Naive thymus-derived CD4-positive, alpha-beta T cell (primary cell): ENCODE measurements at regions of chr6 and their contacts with region 1.

Region 1: DNA sequence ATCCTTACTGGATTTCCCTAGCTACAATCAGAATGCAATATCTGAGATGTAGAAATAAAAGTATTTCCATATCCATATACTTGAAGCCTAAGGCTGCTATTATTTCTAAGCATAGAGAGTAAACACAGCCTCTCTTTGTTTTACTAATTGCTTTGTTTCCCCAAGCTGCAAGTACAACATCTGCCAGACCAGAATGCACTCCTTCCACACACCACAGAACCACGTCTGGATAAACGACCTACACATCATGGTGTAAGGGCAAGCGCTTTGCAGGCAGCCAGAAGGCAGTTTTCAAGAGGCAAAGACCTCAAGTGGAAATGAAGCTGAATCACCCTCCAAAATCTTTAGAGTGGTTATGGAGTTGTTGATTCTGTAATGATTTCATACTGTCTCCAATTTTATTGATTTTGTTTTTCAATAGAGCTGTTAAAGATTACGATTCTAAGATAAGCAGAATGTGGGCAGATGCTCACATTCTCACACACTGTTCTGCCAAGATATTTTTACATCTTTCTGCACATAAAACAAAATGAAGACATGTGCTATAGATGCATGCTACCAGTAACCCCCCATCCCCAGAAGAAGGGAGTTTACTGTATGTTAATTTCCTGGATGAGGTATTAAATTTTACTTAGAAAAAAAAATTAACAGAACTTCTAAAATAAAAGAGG is 88.8 kb downstream of the THEMIS start:
- DNase-seq: no peak
- ATAC-seq: no peak
- H3K4me3 ChIP-seq: no peak overlapping the region
- H3K4me3 Mint-ChIP-seq: peak overlapping the region in 8 of 10 donors; percentile 7 to 66 (median 42)
- H3K27ac ChIP-seq: no peak overlapping the region
- H3K27ac Mint-ChIP-seq: peak overlapping the region in 8 of 9 donors; percentile 30 to 83 (median 58)
- H3K4me1 ChIP-seq: peaks cover 36 to 61% of the 10 kb centered on the region in 2 donors
- H3K4me1 Mint-ChIP-seq: peaks cover 48 to 99% (median 93%) of the 10 kb centered on the region in 7 donors
- H3K27me3 ChIP-seq: no peaks in the 10 kb centered on the region
- H3K27me3 Mint-ChIP-seq: no peaks in the 10 kb centered on the region

Region 2: DNA sequence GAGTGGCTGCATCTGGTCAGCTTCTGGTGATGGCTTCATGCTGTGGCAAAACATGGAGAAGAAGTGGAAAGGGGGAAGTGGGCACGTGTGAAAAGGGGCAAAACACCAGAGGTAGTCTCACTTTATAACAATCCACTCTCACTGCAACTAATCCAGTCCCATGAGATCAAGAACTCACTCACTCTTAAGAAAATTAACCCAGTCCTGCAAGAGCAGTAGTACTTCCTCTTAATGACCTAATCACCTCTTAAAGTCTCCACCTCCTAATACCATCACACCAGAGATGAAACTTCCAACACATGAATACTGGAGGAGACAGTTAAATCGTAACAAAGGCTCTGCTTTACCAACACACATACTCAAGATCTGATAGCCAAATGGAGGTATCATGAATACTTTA is 63.7 kb before region 1 on chr6:
- CTCF ChIA-PET with region 1: no interaction called
- POLR2A ChIA-PET with region 1: no interaction called
- intact Hi-C with region 1: loop called in 1 of 2 experiments (anchors 5 kb)
- DNase-seq: no peak
- ATAC-seq: no peak
- H3K4me3 ChIP-seq: no peak overlapping the region
- H3K4me3 Mint-ChIP-seq: peak overlapping the region in 7 of 10 donors; percentile 2 to 45 (median 23)
- H3K27ac ChIP-seq: no peak overlapping the region
- H3K27ac Mint-ChIP-seq: peak overlapping the region; percentile 22 to 83 (median 62)
- H3K4me1 ChIP-seq: peaks cover 12 to 29% of the 10 kb centered on the region in 2 donors
- H3K4me1 Mint-ChIP-seq: peaks cover 19 to 81% (median 66%) of the 10 kb centered on the region in 7 donors
- H3K27me3 ChIP-seq: no peaks in the 10 kb centered on the region
- H3K27me3 Mint-ChIP-seq: no peaks in the 10 kb centered on the region

Region 3: GRCh38 chr6:127824061-127824460 is 12.0 kb after region 1 on chr6:
- CTCF ChIA-PET with region 1: no interaction called
- POLR2A ChIA-PET with region 1: no interaction called
- intact Hi-C with region 1: loop called in 1 of 2 experiments (anchors 1 kb)
- DNase-seq: no peak
- ATAC-seq: no peak
- H3K4me3 ChIP-seq: no peak overlapping the region
- H3K4me3 Mint-ChIP-seq: peak overlapping the region in 8 of 10 donors; percentile 23 to 66 (median 42)
- H3K27ac ChIP-seq: no peak overlapping the region
- H3K27ac Mint-ChIP-seq: peak overlapping the region in 6 of 9 donors; percentile 23 to 83 (median 62)
- H3K4me1 ChIP-seq: peaks cover 24% of the 10 kb centered on the region in 2 donors
- H3K4me1 Mint-ChIP-seq: peaks cover 23 to 96% (median 88%) of the 10 kb centered on the region in 7 donors
- H3K27me3 ChIP-seq: no peaks in the 10 kb centered on the region
- H3K27me3 Mint-ChIP-seq: no peaks in the 10 kb centered on the region

Region 4: GRCh38 chr6:127849673-127850072 is 37.6 kb after region 1 on chr6:
- CTCF ChIA-PET with region 1: no interaction called
- POLR2A ChIA-PET with region 1: no interaction called
- intact Hi-C with region 1: loop called in 1 of 2 experiments (anchors 5 kb)
- DNase-seq: no peak
- ATAC-seq: no peak
- H3K4me3 ChIP-seq: no peak overlapping the region
- H3K4me3 Mint-ChIP-seq: peak overlapping the region in 2 of 10 donors; percentile 12
- H3K27ac ChIP-seq: no peak overlapping the region
- H3K27ac Mint-ChIP-seq: peak overlapping the region in 3 of 9 donors; percentile 3 to 47 (median 35)
- H3K4me1 ChIP-seq: peaks cover 13 to 17% of the 10 kb centered on the region in 2 donors
- H3K4me1 Mint-ChIP-seq: peaks cover 32 to 86% (median 72%) of the 10 kb centered on the region in 7 donors
- H3K27me3 ChIP-seq: no peaks in the 10 kb centered on the region
- H3K27me3 Mint-ChIP-seq: no peaks in the 10 kb centered on the region

Region 5: DNA sequence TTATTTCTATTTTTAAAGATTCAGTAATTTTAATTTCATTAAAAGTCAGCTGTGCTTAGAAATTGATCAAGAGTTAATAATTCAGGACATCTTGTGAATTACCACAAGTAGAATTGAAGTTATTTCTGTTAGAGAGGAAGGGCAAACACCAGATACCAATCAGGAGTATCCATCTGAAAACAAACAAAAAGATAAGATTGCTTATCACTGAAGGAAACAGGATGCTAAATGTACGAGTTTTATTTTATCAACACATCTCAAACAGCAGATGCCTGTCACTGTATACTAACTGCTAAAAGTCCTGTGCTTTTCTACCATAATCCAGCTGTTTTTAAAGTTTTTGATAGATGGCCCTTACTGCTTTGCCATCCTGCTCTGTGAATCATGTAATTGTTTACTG is 728.7 kb after region 1 on chr6:
- CTCF ChIA-PET with region 1: no interaction called
- POLR2A ChIA-PET with region 1: no interaction called
- intact Hi-C with region 1: no loop called
- DNase-seq: no peak
- ATAC-seq: no peak
- H3K4me3 ChIP-seq: no peak overlapping the region
- H3K4me3 Mint-ChIP-seq: no peak overlapping the region
- H3K27ac ChIP-seq: no peak overlapping the region
- H3K27ac Mint-ChIP-seq: no peak overlapping the region
- H3K4me1 ChIP-seq: no peaks in the 10 kb centered on the region
- H3K4me1 Mint-ChIP-seq: peaks cover 0 to 4% (median 0%) of the 10 kb centered on the region in 7 donors
- H3K27me3 ChIP-seq: no peaks in the 10 kb centered on the region
- H3K27me3 Mint-ChIP-seq: peaks cover 11 to 28% (median 21%) of the 10 kb centered on the region in 5 donors